Common myeloid progenitor, CD34-positive (primary cell): ENCODE measurements at regions of chr15 and their contacts with region 1.

Region 1: DNA sequence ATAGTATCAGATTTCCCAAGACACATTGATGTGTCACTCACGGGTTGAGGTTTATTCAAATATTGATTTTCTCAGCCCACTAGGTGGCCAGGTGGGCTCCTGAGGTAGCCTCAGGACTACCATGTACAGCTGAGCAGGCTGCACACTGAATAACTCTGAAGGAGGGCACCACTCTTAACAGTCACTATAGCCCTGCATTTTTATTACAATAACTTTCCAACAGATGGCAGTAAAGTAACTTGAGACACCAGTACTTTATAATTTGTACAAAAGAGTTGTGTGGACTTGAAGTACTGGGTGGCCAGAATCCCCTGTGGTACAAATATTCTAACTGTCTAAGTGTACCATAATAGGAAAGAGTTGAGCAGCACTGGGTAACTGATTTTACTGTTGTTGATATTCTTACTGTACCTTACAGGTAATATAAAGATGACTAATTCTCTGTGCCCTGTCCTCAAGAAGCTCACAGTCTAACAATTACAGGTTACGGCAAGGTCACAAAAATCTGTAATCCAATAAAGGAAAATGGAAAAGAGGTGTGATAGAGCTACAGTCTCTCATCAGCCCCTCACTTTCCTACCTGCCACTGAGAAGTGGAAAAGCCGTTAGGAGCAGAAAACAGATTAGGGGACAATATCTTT is 76.0 kb downstream of the ETFA start:
- DNase-seq: peak; percentile 51 to 68 (median 66)
- H3K4me3 ChIP-seq: no peak overlapping the region
- H3K27ac ChIP-seq: no peak overlapping the region
- H3K4me1 ChIP-seq: no peaks in the 10 kb centered on the region
- H3K27me3 ChIP-seq: no peaks in the 10 kb centered on the region

Region 2: GRCh38 chr15:76190834-76191538 is 44.3 kb before region 1 on chr15:
- CTCF ChIA-PET with region 1: no interaction called
- POLR2A ChIA-PET with region 1: no interaction called
- DNase-seq: peak; percentile 57 to 74 (median 73)
- H3K4me3 ChIP-seq: peak overlapping the region in 4 of 7 experiments; percentile 9 to 50 (median 18)
- H3K27ac ChIP-seq: no peak overlapping the region
- H3K4me1 ChIP-seq: peaks cover 0 to 15% (median 8%) of the 10 kb centered on the region in 4 experiments
- H3K27me3 ChIP-seq: peaks cover 4 to 59% (median 13%) of the 10 kb centered on the region in 5 experiments

Region 3: GRCh38 chr15:76336254-76337058 is 101.2 kb after region 1 on chr15 and contains the start of gene ISL2:
- CTCF ChIA-PET with region 1: interaction called, 55 read pairs
- POLR2A ChIA-PET with region 1: no interaction called
- DNase-seq: peak in 2 of 3 donors; percentile 56 to 61
- H3K4me3 ChIP-seq: peak within 1 kb of the TSS in 5 of 7 experiments; percentile 7 to 47 (median 34)
- H3K27ac ChIP-seq: peak within 1 kb of the TSS in 1 of 2 experiments; percentile 54
- H3K4me1 ChIP-seq: peaks cover 0 to 60% (median 57%) of the 10 kb centered on the region in 4 experiments
- H3K27me3 ChIP-seq: peaks cover 10 to 89% (median 64%) of the 10 kb centered on the region in 5 experiments